H1 (cell line): ENCODE measurements at regions of chr16 and their contacts with region 1.

Region 1: GRCh38 chr16:62530426-62530825 is 494.2 kb upstream of the CDH8 start:
- DNase-seq: no peak
- H3K4me3 ChIP-seq: no peak overlapping the region
- H3K27ac ChIP-seq: no peak overlapping the region
- H3K4me1 ChIP-seq: no peaks in the 10 kb centered on the region
- H3K27me3 ChIP-seq: no peaks in the 10 kb centered on the region
- CTCF ChIP-seq: no peak
- EP300 ChIP-seq: no peak
- POLR2A ChIP-seq: no peak
- RAD21 ChIP-seq: no peak

Region 2: DNA sequence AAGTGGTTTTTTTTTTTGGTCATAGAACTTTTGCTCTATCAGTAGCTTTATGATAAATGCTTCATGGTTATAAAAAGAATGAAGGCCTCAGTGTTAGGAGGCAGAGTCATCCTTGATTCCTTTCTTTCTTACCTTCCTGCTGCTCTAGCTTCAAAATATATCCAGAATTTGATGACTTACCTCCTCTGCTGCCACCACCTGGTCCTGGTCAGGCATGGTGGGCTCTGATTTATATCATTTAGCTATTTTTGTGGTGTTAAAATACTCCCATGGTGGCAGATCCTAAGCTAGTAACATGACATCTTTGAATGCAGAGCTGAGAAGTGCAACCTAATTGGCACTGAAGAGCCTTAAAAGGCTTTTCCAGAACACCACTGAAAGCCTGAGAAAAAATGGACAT is 14.6 kb after region 1 on chr16:
- CTCF ChIA-PET with region 1: interaction called, 12 read pairs
- POLR2A ChIA-PET with region 1: no interaction called
- DNase-seq: no peak
- H3K4me3 ChIP-seq: no peak overlapping the region
- H3K27ac ChIP-seq: no peak overlapping the region
- H3K4me1 ChIP-seq: peaks cover 0 to 5% (median 0%) of the 10 kb centered on the region in 4 experiments; a peak in 1 of 7 replicates
- H3K27me3 ChIP-seq: no peaks in the 10 kb centered on the region
- CTCF ChIP-seq: peak; percentile 11 to 49 (median 37)
- EP300 ChIP-seq: no peak
- POLR2A ChIP-seq: no peak
- RAD21 ChIP-seq: peak; percentile 61 to 70

Region 3: DNA sequence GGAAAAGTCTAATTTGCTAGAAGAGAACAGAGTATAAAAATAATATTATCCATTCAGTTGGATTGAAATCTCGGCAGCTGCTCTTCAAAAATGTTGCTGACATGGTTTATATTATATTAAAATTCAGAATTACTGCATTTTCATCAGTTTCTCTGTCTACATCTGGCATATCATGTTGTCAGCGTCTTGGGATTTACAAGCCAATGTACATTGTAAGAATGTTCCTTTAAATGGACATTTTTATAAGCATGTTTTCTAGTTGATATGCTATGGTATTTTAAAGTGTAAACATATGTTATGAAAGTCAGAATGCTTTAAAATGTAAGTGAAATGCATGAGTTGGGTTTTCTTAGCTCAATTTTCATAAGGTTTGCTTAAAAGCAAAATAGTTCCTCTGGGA is 33.9 kb after region 1 on chr16:
- CTCF ChIA-PET with region 1: no interaction called
- POLR2A ChIA-PET with region 1: no interaction called
- DNase-seq: no peak
- H3K4me3 ChIP-seq: no peak overlapping the region
- H3K27ac ChIP-seq: no peak overlapping the region
- H3K4me1 ChIP-seq: no peaks in the 10 kb centered on the region
- H3K27me3 ChIP-seq: no peaks in the 10 kb centered on the region
- CTCF ChIP-seq: no peak
- EP300 ChIP-seq: no peak
- POLR2A ChIP-seq: no peak
- RAD21 ChIP-seq: no peak